Testis (tissue), 5 donors: ENCODE measurements at regions of chr10 and their contacts with region 1.

Region 1: DNA sequence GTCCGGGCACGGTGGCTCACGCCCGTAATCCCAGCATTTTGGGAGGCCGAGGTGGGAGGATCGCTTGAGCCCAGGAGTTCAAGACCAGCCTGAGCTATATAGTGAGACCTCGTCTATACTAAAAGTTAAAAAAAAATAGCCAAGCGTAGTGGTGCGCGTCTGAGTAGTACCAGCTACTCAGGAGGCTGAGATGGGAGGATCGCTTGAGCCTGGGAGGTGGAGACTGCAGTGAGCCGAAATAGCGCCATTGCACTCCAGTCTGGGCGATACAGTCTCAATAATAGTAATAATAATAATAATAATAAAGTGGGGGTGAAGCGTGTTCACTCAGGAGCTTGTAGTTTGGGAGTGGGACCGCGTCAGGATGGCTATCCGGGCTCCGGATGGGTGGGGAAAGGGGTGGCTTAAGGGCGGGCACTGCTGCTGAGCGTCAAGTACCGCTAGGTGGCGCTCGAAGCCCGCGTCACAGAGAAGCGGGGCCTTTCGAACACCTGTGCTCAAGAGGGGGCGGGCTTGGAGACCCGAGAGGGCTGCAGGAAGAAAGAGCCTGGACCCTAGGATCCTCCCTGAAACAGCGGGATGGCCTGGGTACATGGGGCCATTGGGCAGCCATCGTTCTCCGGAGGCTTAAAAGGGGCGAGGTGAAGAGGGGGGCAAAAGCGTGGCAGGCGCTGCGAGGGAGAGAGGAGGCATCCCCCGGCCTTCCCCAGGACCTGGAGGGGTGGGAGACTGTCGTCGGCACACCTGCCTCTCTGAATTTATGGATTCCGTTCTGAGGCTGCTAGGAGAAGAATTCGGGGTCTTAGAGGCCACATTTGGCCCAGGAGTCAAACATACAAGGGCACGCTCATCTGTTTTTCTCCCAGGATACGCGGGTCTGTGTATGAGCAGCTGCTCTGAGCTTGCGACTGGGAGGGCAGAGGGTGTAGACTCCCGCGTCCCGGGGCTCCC is 14.5 kb downstream of the LBX1 start:
- DNase-seq: peak; percentile 84
- H3K4me3 ChIP-seq: peak overlapping the region; percentile 15 to 53
- H3K27ac ChIP-seq: no peak overlapping the region
- H3K4me1 ChIP-seq: peaks cover 16% of the 10 kb centered on the region
- H3K27me3 ChIP-seq: no peaks in the 10 kb centered on the region
- CTCF ChIP-seq: peak; percentile 53 to 95 (median 71)
- POLR2A ChIP-seq: no peak

Region 2: GRCh38 chr10:101467286-101467770 is 252.6 kb after region 1 on chr10:
- intact Hi-C with region 1: loop called (anchors 10 kb)
- DNase-seq: no peak
- H3K4me3 ChIP-seq: no peak overlapping the region
- H3K27ac ChIP-seq: no peak overlapping the region
- H3K4me1 ChIP-seq: peaks cover 8% of the 10 kb centered on the region
- H3K27me3 ChIP-seq: no peaks in the 10 kb centered on the region
- CTCF ChIP-seq: peak; percentile 46 to 83 (median 65)
- POLR2A ChIP-seq: no peak

Region 3: DNA sequence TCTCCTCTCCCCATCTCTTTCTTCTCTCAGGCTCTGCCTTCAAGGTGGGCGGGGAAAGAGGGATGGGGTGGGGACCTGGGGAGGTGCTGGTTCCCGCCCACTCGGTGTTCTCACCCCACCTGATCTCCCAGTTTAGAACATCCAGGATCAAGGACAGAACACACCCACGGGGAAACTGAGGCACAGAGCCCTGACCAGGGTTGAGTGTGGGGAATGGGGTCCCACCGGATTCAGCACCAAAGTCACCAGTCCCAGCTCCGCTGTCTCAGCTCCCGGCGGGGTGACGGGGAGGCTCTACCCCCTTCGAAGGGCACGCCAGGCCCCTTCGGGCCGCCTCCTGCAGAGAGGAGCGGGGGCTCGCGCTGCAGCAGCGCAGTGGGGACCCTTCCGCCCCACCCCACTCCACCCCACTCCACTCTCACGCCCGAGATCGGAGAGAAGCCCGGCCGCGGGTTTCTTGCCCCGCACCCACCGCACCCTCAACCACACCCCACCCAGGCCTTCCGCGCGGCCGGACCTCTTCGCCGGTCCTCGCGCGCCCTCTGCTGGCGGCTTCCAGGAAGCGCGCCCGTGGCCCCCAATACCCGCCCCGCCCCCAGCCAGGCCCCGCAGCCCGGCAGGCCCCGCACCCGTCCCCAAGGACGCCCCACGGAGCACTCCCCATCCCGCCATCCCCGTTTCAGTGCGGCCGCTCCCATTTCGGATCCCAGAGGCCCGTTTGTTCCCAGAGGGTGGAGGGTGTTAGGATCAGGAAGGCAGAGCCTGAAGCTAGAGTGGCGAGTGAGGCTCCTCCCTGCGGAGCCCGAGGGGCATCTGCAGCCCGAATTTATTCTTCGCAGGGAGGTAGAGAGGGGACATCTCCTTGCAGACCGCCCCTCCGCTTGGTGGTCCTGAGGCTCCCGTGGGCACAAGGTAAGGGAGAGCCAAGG is 355.4 kb after region 1 on chr10:
- intact Hi-C with region 1: loop called (anchors 5 kb)
- DNase-seq: peak; percentile 92
- H3K4me3 ChIP-seq: peak overlapping the region; percentile 52 to 62
- H3K27ac ChIP-seq: peak overlapping the region in 1 of 2 donors; percentile 31
- H3K4me1 ChIP-seq: peaks cover 22% of the 10 kb centered on the region
- H3K27me3 ChIP-seq: no peaks in the 10 kb centered on the region
- CTCF ChIP-seq: peak; percentile 70 to 95 (median 73)
- POLR2A ChIP-seq: no peak